BJ (cell line): ENCODE measurements at regions of chr9 and their contacts with region 1.

Region 1: GRCh38 chr9:121598965-121599871 is 52.2 kb upstream of the DAB2IP start:
- DNase-seq: no peak
- H3K4me3 ChIP-seq: peak overlapping the region; percentile 54
- H3K27me3 ChIP-seq: 0 out of 2 replicates have a peak, but pooled peaks cover 2% of the 10 kb centered on the region
- CTCF ChIP-seq: no peak

Region 2: DNA sequence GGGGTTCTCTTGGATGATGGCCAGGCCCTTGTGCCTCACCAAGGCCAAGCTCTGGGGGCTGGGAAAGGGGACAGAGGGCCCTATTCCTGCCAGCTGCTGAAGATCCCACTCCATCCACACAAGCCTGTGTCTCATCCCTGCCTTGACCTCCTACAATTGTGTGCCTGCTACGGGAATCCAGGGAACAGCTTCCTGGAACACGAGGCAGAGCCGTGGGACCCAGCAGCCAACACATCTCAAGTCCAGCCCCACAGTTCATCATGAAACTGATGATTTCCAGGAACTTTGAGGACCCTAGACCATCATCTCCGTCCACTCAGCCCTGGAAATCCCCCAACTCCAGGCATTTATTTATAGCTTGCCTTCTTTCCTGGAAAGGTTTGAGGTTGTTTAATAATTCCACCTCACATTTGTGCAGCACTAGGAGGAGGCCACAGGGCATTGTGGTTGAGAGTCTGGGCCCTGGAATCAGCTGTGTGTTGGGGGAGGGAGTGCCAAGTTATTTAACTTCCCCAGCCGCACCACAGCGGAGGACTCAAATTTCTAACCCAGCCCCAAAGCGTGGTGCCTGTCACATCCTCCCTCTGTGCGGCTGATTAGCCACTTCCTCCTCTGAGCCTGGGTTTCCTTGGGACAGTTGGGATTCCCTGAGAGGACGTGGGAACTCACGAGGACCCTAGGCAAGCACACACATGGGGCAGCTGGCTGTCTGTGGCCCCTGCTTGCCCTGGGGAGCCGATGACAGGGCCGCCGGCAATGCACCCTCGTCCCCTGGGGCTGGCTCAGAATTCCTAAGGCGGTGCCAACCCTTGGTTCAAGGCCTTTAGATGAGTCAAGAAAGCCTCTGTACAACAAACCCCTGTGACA is 41.4 kb before region 1 on chr9:
- CTCF ChIA-PET with region 1: interaction called, 12 read pairs
- POLR2A ChIA-PET with region 1: interaction called, 3 read pairs
- DNase-seq: peak; percentile 78
- H3K4me3 ChIP-seq: no peak overlapping the region
- H3K27me3 ChIP-seq: peaks cover 3% of the 10 kb centered on the region
- CTCF ChIP-seq: no peak

Region 3: DNA sequence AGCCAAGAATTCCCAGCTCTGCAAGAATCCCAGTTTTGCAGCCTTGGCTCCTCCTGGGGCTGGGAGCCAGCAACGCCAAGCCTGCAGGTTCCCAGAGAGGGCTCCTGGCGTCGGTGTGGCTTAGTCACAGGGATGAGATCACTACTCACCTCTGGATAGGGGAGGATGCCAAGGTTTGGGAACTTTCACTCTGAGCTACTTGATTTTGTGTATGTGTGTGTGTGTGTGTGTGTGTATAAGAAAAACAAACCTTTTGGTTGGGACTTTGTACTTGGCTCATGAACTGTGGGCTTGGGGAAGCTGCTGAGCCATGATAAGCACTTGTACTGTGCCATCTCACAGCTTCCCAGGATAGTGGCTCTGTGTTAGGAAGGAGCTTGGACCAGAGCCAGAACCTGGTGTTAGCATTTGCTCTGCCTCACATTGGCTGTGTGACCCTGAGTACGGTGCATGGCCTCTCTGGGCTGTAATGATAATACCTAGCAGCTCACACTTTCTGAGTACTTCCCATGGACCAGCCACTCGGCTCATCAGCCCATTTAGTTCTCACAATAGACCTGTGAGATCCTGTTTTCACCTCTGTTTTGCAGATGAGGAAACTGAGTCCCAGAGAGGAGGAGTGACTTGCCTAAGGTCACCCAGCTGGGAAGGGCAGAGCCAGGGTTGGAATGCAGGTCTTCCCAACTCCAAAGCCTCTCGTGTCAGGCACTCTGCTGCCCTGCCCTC is 10.8 kb after region 1 on chr9:
- CTCF ChIA-PET with region 1: interaction called, 14 read pairs
- POLR2A ChIA-PET with region 1: no interaction called
- DNase-seq: no peak
- H3K4me3 ChIP-seq: no peak overlapping the region
- H3K27me3 ChIP-seq: peaks cover 4% of the 10 kb centered on the region
- CTCF ChIP-seq: no peak